ENCODE measurements at regions of chr9 and their contacts with region 1.

Region 1: DNA sequence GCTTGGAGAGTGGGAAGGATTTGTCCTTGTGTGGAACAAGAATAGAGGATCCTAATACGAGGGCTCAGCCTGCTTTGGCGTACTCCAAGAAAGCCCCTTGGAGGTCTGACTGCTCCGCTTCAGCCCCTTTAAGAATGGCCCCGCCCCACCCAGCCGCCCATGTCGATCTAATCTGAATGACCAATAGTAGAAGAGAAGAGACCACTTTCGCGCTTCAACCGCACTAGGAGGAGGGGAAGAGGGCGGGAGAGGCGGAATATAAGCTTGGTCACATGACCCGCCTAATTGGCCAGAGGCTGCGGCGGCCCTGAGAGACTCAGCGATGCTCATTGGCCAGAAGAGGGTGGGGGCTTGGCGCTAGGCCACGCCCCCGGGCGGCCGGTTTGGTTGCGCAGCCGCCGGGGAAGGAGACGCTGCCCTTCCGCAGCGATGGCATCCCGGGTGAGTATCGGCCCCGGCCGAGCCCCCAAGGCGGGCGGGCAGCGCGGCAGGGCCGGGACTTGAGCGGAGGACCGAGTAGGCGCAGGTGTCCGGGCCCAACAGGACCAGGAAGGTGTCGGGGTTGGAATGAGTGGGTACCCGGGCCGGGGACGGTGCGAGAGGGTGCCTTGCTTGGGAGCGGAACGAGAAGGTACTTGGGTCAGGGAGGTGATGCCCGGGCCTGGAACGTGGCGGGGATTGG is at the start of gene MIGA2:
- DNase-seq: peak; percentile 98
- ATAC-seq: peak; percentile 99
- H3K4me3 ChIP-seq: peak within 1 kb of the TSS; percentile 51 to 98 (median 91)
- H3K4me3 Mint-ChIP-seq: peak within 1 kb of the TSS; percentile 97
- H3K27ac ChIP-seq: peak within 1 kb of the TSS; percentile 9 to 82
- H3K27ac Mint-ChIP-seq: peak within 1 kb of the TSS; percentile 85
- H3K4me1 ChIP-seq: peaks cover 19 to 25% of the 10 kb centered on the region in 2 donors
- H3K4me1 Mint-ChIP-seq: peaks cover 34% of the 10 kb centered on the region
- H3K27me3 ChIP-seq: no peaks in the 10 kb centered on the region
- H3K27me3 Mint-ChIP-seq: no peaks in the 10 kb centered on the region
- CTCF ChIP-seq: no peak
- total RNA-seq, gene MIGA2: 71.6 and 78.1 TPM in 2 replicates

Region 2: GRCh38 chr9:128127990-128128835 is 908.2 kb before region 1 on chr9:
- CTCF ChIA-PET with region 1: no interaction called
- POLR2A ChIA-PET with region 1: no interaction called
- intact Hi-C with region 1: loop called (anchors 2 kb)
- DNase-seq: peak; percentile 97
- ATAC-seq: peak; percentile 78
- H3K4me3 ChIP-seq: peak overlapping the region; percentile 58 to 97 (median 83)
- H3K4me3 Mint-ChIP-seq: peak overlapping the region; percentile 95
- H3K27ac ChIP-seq: peak overlapping the region; percentile 93 to 99
- H3K27ac Mint-ChIP-seq: peak overlapping the region; percentile 99
- H3K4me1 ChIP-seq: peaks cover 26 to 34% of the 10 kb centered on the region in 2 donors
- H3K4me1 Mint-ChIP-seq: peaks cover 35% of the 10 kb centered on the region
- H3K27me3 ChIP-seq: peaks cover 0 to 6% (median 0%) of the 10 kb centered on the region in 4 experiments
- H3K27me3 Mint-ChIP-seq: peaks cover 7% of the 10 kb centered on the region
- CTCF ChIP-seq: no peak

Region 3: GRCh38 chr9:128829477-128830251 is 206.7 kb before region 1 on chr9 and contains the start of gene SPOUT1:
- CTCF ChIA-PET with region 1: no interaction called
- POLR2A ChIA-PET with region 1: no interaction called
- intact Hi-C with region 1: no loop called
- DNase-seq: peak; percentile 95
- ATAC-seq: peak; percentile 99
- H3K4me3 ChIP-seq: peak within 1 kb of the TSS; percentile 43 to 97 (median 91)
- H3K4me3 Mint-ChIP-seq: peak within 1 kb of the TSS; percentile 97
- H3K27ac ChIP-seq: peak within 1 kb of the TSS; percentile 42 to 74
- H3K27ac Mint-ChIP-seq: peak within 1 kb of the TSS; percentile 95
- H3K4me1 ChIP-seq: peaks cover 12 to 17% of the 10 kb centered on the region in 2 donors
- H3K4me1 Mint-ChIP-seq: peaks cover 19% of the 10 kb centered on the region
- H3K27me3 ChIP-seq: no peaks in the 10 kb centered on the region
- H3K27me3 Mint-ChIP-seq: no peaks in the 10 kb centered on the region
- CTCF ChIP-seq: no peak
- total RNA-seq, gene SPOUT1: 70.0 and 73.0 TPM in 2 replicates

Region 4: DNA sequence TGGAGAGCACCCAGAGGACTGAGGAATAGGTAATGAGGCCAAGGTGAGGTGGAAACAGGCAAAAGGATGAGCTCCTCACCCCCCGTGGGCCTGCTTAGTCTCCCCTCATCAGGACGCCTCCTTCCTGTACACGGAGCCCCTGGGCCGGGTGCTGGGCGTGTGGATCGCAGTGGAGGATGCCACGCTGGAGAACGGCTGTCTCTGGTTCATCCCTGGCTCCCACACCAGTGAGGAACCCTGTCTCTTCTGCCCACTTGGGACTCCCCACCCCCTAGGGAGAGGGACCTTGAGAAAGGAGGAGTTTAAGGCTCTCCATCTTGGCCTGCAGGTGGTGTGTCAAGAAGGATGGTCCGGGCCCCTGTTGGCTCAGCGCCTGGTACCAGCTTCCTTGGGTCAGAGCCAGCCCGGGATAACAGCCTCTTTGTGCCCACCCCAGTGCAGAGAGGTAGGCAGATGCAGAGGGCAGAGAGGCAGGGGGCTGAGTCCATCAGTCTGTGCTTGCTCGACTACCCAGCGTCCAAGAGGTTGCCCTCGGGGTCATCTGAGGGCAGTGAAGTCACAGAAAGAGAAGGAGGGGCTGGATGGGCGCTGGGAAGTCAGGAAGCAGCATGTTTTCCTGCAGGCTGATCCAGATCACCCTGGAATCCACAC is 96.0 kb before region 1 on chr9:
- CTCF ChIA-PET with region 1: no interaction called
- POLR2A ChIA-PET with region 1: no interaction called
- intact Hi-C with region 1: no loop called
- DNase-seq: no peak
- ATAC-seq: no peak
- H3K4me3 ChIP-seq: no peak overlapping the region
- H3K4me3 Mint-ChIP-seq: no peak overlapping the region
- H3K27ac ChIP-seq: no peak overlapping the region
- H3K27ac Mint-ChIP-seq: no peak overlapping the region
- H3K4me1 ChIP-seq: no peaks in the 10 kb centered on the region
- H3K4me1 Mint-ChIP-seq: no peaks in the 10 kb centered on the region
- H3K27me3 ChIP-seq: no peaks in the 10 kb centered on the region
- H3K27me3 Mint-ChIP-seq: no peaks in the 10 kb centered on the region
- CTCF ChIP-seq: no peak

Region 5: DNA sequence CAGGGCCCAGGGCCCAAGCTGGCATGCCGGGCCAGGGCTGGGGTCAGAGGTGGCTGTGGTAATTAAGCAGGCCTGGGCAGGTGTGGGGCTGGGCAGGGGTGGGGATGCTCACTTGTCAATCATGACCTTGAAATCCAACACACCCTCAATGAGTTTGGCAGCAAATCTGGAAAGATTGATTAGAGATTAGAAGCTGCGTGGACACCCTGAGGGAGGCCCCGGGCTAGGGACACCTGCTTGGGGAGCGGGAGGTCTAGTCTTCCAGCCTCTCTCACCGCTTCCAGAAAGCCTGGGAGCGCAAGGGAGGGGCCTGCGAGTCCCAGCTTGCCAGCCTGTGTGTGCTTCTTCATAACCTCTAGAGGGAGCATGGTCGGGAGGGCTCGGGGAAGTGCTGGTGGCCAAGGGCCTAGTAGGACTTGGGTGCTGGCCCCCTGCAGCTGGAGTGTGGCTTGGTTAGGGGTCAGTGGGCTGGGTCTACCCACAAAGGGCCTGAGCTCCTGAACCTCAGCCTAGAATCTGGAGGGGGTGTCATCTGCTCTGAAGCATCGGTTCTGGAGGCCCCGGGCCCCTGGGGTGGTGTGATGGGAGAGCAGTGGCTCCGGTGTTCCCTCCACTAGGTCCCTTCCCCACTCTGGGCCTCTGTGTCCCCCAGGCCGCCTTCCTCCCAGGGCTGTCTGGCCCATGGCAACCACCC is 66.7 kb after region 1 on chr9:
- CTCF ChIA-PET with region 1: no interaction called
- POLR2A ChIA-PET with region 1: no interaction called
- intact Hi-C with region 1: no loop called
- DNase-seq: no peak
- ATAC-seq: peak; percentile 56
- H3K4me3 ChIP-seq: no peak overlapping the region
- H3K4me3 Mint-ChIP-seq: no peak overlapping the region
- H3K27ac ChIP-seq: no peak overlapping the region
- H3K27ac Mint-ChIP-seq: no peak overlapping the region
- H3K4me1 ChIP-seq: no peaks in the 10 kb centered on the region
- H3K4me1 Mint-ChIP-seq: no peaks in the 10 kb centered on the region
- H3K27me3 ChIP-seq: no peaks in the 10 kb centered on the region
- H3K27me3 Mint-ChIP-seq: no peaks in the 10 kb centered on the region
- CTCF ChIP-seq: no peak

Region 6: GRCh38 chr9:130118841-130119518 is 1082.6 kb after region 1 on chr9:
- CTCF ChIA-PET with region 1: no interaction called
- POLR2A ChIA-PET with region 1: no interaction called
- intact Hi-C with region 1: no loop called
- DNase-seq: no peak
- ATAC-seq: no peak
- H3K4me3 ChIP-seq: no peak overlapping the region
- H3K4me3 Mint-ChIP-seq: no peak overlapping the region
- H3K27ac ChIP-seq: no peak overlapping the region
- H3K27ac Mint-ChIP-seq: no peak overlapping the region
- H3K4me1 ChIP-seq: peaks cover 0 to 8% of the 10 kb centered on the region in 2 donors
- H3K4me1 Mint-ChIP-seq: peaks cover 11% of the 10 kb centered on the region
- H3K27me3 ChIP-seq: no peaks in the 10 kb centered on the region
- H3K27me3 Mint-ChIP-seq: no peaks in the 10 kb centered on the region
- CTCF ChIP-seq: no peak

Measured in B cell (primary cell).